Mammary epithelial cell (primary cell): ENCODE measurements at regions of chr17 and their contacts with region 1.

Region 1: DNA sequence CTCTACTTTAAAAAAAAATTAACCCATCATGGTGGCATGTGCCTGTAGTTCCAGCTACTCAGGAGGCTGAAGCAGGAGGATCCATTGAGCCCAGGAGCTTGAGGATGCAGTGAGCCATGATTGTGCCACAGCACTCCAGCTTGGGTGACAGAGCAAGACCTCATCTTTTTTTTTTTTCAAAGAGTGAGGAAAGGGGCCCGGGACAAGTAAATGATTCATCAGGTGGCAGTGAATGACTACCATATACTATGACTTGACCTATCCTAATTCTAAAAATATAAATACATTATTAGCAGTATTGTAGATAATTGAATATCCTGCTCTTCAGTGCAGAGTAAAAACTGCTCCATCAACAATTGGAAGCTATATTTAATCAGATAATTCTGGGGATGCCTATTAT is 55.3 kb downstream of the CLUH start:
- DNase-seq: no peak
- H3K4me3 ChIP-seq: no peak overlapping the region
- H3K27ac ChIP-seq: no peak overlapping the region
- H3K4me1 ChIP-seq: peaks cover 4% of the 10 kb centered on the region
- H3K27me3 ChIP-seq: no peaks in the 10 kb centered on the region
- CTCF ChIP-seq: no peak

Region 2: DNA sequence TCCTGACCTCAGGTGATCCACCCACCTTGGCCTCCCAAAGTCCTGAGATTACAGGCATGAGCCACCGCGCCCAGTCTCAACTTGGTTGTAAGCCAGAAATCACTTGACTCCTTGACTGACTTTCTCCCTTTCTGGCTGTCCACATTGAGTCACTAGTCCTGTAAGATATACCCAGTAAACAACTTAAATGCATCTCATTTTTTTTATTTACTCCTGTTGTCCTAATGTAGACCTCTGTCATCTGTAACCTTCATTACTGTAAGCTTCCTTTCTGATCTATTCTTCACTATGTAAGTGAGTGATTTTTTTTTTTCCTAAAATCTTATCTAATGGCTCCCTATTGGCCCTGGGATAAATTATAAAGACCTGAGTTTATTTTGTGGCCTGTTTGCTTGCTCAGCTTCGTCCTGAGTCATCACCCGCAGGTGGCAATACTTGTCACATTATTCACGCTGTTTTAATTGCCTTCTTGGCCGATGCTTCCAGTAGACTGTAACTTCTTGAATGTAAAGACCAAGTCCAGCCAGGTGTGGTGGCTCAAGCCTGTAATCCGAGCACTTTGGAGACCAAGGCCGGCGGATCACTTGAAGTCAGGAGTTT is 21.8 kb before region 1 on chr17:
- CTCF ChIA-PET with region 1: no interaction called
- dilution Hi-C with region 1: no loop called
- in situ Hi-C with region 1: no loop called
- intact Hi-C with region 1: loop called (anchors 2 kb)
- DNase-seq: peak; percentile 83
- H3K4me3 ChIP-seq: no peak overlapping the region
- H3K27ac ChIP-seq: no peak overlapping the region
- H3K4me1 ChIP-seq: peaks cover 32% of the 10 kb centered on the region
- H3K27me3 ChIP-seq: no peaks in the 10 kb centered on the region
- CTCF ChIP-seq: no peak

Region 3: DNA sequence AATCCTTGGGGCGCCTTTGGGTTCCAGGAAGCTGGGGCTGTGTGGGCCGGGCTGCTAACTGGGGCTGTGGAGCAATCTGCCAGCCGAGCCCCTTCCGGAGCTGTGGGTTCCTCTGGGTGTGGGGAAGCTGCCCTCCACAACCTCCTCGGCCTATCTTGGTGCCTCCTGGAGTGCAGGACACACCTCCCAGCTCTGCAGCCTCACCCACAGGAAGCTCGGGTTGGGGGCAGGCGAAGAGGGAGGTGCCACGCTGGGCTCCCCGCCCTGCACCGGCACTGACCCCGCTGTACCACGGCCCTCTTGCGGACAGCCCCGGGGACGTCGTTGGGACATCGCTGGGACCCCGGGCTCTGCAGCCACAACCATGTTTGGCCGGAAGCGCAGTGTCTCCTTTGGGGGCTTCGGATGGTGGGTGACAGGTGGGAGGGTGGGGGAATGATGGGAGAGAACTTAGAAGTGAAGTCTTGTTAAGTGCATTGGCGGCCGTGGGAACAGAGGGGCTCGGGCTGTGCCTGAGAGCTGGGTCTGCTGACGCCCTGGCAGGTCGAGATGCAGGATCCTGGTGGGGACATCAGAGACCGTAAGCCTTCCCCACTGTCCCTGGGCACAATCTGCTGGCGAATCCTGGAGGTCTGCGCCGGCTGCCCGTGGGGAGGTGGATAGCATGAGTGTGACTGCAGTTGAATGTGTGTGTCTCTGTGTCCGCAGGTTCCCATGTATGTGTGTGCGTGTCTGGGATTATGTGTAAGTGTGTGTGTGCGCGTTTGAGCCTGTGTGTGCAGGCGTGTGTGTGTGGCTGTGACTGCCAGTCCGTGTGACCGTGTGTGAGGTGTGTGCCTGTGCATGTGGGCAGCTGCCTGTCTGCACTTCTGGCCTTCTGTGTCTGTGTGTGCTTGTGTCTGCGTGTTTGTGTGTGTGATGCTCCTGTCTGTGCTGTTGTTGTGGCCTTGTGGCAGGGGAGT is 140.2 kb after region 1 on chr17 and contains the start of gene RAP1GAP2:
- CTCF ChIA-PET with region 1: no interaction called
- dilution Hi-C with region 1: no loop called
- in situ Hi-C with region 1: no loop called
- intact Hi-C with region 1: no loop called
- DNase-seq: no peak
- H3K4me3 ChIP-seq: no peak within 1 kb of the TSS
- H3K27ac ChIP-seq: no peak within 1 kb of the TSS
- H3K4me1 ChIP-seq: no peaks in the 10 kb centered on the region
- H3K27me3 ChIP-seq: no peaks in the 10 kb centered on the region
- CTCF ChIP-seq: no peak
- total RNA-seq, gene RAP1GAP2: 22.3 to 41.2 TPM